Naive thymus-derived CD4-positive, alpha-beta T cell (primary cell): ENCODE measurements at regions of chr14 and their contacts with region 1.

Region 1: GRCh38 chr14:73759714-73760597 is 45.8 kb upstream of the PNMA1 start:
- DNase-seq: peak; percentile 91 to 97 (median 93)
- ATAC-seq: peak; percentile 89
- H3K4me3 ChIP-seq: peak overlapping the region; percentile 72
- H3K4me3 Mint-ChIP-seq: peak overlapping the region; percentile 85 to 96 (median 90)
- H3K27ac ChIP-seq: peak overlapping the region; percentile 86
- H3K27ac Mint-ChIP-seq: peak overlapping the region; percentile 95 to 98 (median 97)
- H3K4me1 ChIP-seq: peaks cover 63 to 65% of the 10 kb centered on the region in 2 donors
- H3K4me1 Mint-ChIP-seq: peaks cover 57 to 87% (median 79%) of the 10 kb centered on the region in 7 donors
- H3K27me3 ChIP-seq: no peaks in the 10 kb centered on the region
- H3K27me3 Mint-ChIP-seq: no peaks in the 10 kb centered on the region

Region 2: DNA sequence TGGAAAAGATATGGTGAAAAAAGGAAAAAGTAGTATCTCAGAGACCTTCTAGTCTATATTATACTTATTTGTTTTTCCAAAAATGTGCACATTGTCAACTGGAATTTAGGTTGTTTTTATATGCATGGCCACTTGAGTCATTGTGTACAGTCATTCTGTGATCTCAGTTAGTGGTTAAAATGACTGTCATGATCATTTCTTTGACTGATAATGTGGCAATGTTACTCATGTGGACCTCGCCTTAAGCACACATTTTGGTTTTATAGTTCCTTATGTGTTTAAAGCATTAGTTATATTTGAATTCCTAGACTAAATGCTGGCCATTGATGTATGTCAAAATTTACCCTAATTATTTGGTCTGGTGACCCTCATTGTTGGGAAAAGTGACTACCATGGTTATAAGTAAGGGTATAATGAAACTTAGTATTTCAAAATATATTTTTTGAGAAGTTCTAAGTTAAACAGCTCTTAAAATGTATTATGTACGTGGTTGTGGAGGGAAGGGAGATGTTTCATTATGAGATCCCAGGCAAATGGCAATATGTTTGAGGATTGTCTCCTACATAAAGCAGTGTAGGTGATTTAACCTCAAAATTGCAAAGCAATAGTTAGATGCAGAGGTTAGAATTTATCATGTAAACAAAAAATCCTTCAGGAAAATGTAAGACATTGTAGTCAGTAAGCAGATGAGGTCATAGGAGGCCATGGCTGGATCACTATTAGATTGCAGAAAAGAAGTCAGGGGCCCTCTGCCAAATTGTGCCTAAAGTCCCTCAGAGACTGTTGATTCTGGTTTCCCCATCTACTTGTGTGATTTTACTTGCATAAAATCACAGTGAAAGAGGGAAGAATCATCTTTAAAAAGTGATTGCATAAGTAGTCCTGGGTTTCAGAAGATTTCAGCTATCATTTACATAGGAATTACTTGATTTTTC is 63.2 kb before region 1 on chr14:
- CTCF ChIA-PET with region 1: no interaction called
- POLR2A ChIA-PET with region 1: no interaction called
- intact Hi-C with region 1: no loop called
- DNase-seq: no peak
- ATAC-seq: no peak
- H3K4me3 ChIP-seq: no peak overlapping the region
- H3K4me3 Mint-ChIP-seq: peak overlapping the region in 1 of 10 donors; percentile 35
- H3K27ac ChIP-seq: no peak overlapping the region
- H3K27ac Mint-ChIP-seq: peak overlapping the region in 1 of 9 donors; percentile 40
- H3K4me1 ChIP-seq: no peaks in the 10 kb centered on the region
- H3K4me1 Mint-ChIP-seq: peaks cover 0 to 28% (median 0%) of the 10 kb centered on the region in 7 donors
- H3K27me3 ChIP-seq: no peaks in the 10 kb centered on the region
- H3K27me3 Mint-ChIP-seq: no peaks in the 10 kb centered on the region

Region 3: GRCh38 chr14:73713803-73714655 is 45.9 kb before region 1 on chr14 and contains the start of gene PNMA1:
- CTCF ChIA-PET with region 1: no interaction called
- POLR2A ChIA-PET with region 1: interaction called, 22 read pairs
- intact Hi-C with region 1: loop called (anchors 1 to 2 kb)
- DNase-seq: peak; percentile 76 to 90 (median 83)
- ATAC-seq: peak; percentile 91
- H3K4me3 ChIP-seq: peak within 1 kb of the TSS; percentile 92
- H3K4me3 Mint-ChIP-seq: peak within 1 kb of the TSS; percentile 91 to 100 (median 97)
- H3K27ac ChIP-seq: peak within 1 kb of the TSS; percentile 83
- H3K27ac Mint-ChIP-seq: peak within 1 kb of the TSS; percentile 93 to 99 (median 96)
- H3K4me1 ChIP-seq: peaks cover 3 to 4% of the 10 kb centered on the region in 2 donors
- H3K4me1 Mint-ChIP-seq: peaks cover 22 to 40% (median 26%) of the 10 kb centered on the region in 7 donors
- H3K27me3 ChIP-seq: no peaks in the 10 kb centered on the region
- H3K27me3 Mint-ChIP-seq: no peaks in the 10 kb centered on the region
- total RNA-seq, gene PNMA1: 21.6 to 40.4 (median 37.1) TPM

Region 4: DNA sequence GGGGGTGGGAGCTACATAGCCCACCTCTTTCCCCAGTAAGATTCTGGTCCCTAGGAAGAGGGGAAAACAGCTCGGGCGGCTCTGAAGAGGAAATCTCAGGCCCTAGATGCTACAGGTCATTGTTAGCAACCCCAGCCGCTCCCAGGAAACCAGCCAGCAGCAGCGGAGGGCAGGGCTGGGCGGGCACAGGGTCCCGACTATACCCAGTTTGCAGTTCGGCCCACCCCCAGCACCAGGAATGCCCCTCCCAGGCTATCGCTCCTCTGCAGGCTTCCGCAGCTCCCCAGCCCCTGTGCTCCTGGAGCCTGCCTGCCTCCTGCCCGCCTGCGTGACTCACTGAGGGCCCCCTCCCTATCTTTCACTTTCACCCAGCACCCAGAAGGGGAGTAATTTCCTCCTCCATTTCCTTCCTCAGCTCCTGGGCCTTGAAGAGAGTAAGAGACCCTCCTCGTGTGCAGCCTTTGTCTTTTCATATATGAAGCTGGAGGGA is 18.5 kb before region 1 on chr14:
- CTCF ChIA-PET with region 1: interaction called, 37 read pairs
- POLR2A ChIA-PET with region 1: interaction called, 267 read pairs
- intact Hi-C with region 1: loop called (anchors 1 kb)
- DNase-seq: peak in 7 of 9 donors; percentile 54 to 75 (median 57)
- ATAC-seq: peak; percentile 78
- H3K4me3 ChIP-seq: peak overlapping the region; percentile 52
- H3K4me3 Mint-ChIP-seq: peak overlapping the region; percentile 66 to 95 (median 88)
- H3K27ac ChIP-seq: peak overlapping the region; percentile 72
- H3K27ac Mint-ChIP-seq: peak overlapping the region; percentile 77 to 99 (median 93)
- H3K4me1 ChIP-seq: peaks cover 65 to 69% of the 10 kb centered on the region in 2 donors
- H3K4me1 Mint-ChIP-seq: peaks cover 43 to 71% (median 67%) of the 10 kb centered on the region in 7 donors
- H3K27me3 ChIP-seq: no peaks in the 10 kb centered on the region
- H3K27me3 Mint-ChIP-seq: no peaks in the 10 kb centered on the region

Region 5: GRCh38 chr14:73777401-73777800 is 17.4 kb after region 1 on chr14:
- CTCF ChIA-PET with region 1: interaction called, 12 read pairs
- POLR2A ChIA-PET with region 1: interaction called, 81 read pairs
- intact Hi-C with region 1: loop called in 1 of 2 experiments (anchors 1 kb)
- DNase-seq: peak in 3 of 9 donors; percentile 34 to 52 (median 52)
- ATAC-seq: peak; percentile 67
- H3K4me3 ChIP-seq: no peak overlapping the region
- H3K4me3 Mint-ChIP-seq: peak overlapping the region in 6 of 10 donors; percentile 15 to 59 (median 27)
- H3K27ac ChIP-seq: no peak overlapping the region
- H3K27ac Mint-ChIP-seq: peak overlapping the region in 8 of 9 donors; percentile 40 to 87 (median 78)
- H3K4me1 ChIP-seq: peaks cover 31 to 48% of the 10 kb centered on the region in 2 donors
- H3K4me1 Mint-ChIP-seq: peaks cover 57 to 83% (median 69%) of the 10 kb centered on the region in 7 donors
- H3K27me3 ChIP-seq: no peaks in the 10 kb centered on the region
- H3K27me3 Mint-ChIP-seq: no peaks in the 10 kb centered on the region

Region 6: GRCh38 chr14:73825551-73826188 is 65.7 kb after region 1 on chr14:
- CTCF ChIA-PET with region 1: interaction called, 6 read pairs
- POLR2A ChIA-PET with region 1: interaction called, 7 read pairs
- intact Hi-C with region 1: loop called (anchors 1 kb)
- DNase-seq: peak; percentile 51 to 76 (median 66)
- ATAC-seq: peak; percentile 96
- H3K4me3 ChIP-seq: no peak overlapping the region
- H3K4me3 Mint-ChIP-seq: no peak overlapping the region
- H3K27ac ChIP-seq: no peak overlapping the region
- H3K27ac Mint-ChIP-seq: no peak overlapping the region
- H3K4me1 ChIP-seq: no peaks in the 10 kb centered on the region
- H3K4me1 Mint-ChIP-seq: peaks cover 0 to 21% (median 0%) of the 10 kb centered on the region in 7 donors
- H3K27me3 ChIP-seq: no peaks in the 10 kb centered on the region
- H3K27me3 Mint-ChIP-seq: peaks cover 0 to 3% (median 0%) of the 10 kb centered on the region in 5 donors

Region 7: GRCh38 chr14:73886449-73887317 is 126.7 kb after region 1 on chr14 and contains the start of gene ZNF410:
- CTCF ChIA-PET with region 1: no interaction called
- POLR2A ChIA-PET with region 1: interaction called, 3 read pairs
- intact Hi-C with region 1: loop called (anchors 1 to 2 kb)
- DNase-seq: peak; percentile 74 to 94 (median 83)
- ATAC-seq: peak; percentile 99
- H3K4me3 ChIP-seq: peak within 1 kb of the TSS; percentile 82
- H3K4me3 Mint-ChIP-seq: peak within 1 kb of the TSS; percentile 90 to 99 (median 98)
- H3K27ac ChIP-seq: peak within 1 kb of the TSS; percentile 97
- H3K27ac Mint-ChIP-seq: peak within 1 kb of the TSS; percentile 64 to 100 (median 99)
- H3K4me1 ChIP-seq: peaks cover 17 to 22% of the 10 kb centered on the region in 2 donors
- H3K4me1 Mint-ChIP-seq: peaks cover 24 to 56% (median 47%) of the 10 kb centered on the region in 7 donors
- H3K27me3 ChIP-seq: no peaks in the 10 kb centered on the region
- H3K27me3 Mint-ChIP-seq: no peaks in the 10 kb centered on the region
- total RNA-seq, gene ZNF410: 44.8 to 79.7 (median 51.1) TPM

Region 8: GRCh38 chr14:74018586-74019407 is 258.8 kb after region 1 on chr14 and contains the starts of genes BBOF1 and ENTPD5:
- CTCF ChIA-PET with region 1: no interaction called
- POLR2A ChIA-PET with region 1: interaction called, 3 read pairs
- intact Hi-C with region 1: loop called in 1 of 2 experiments (anchors 1 kb)
- DNase-seq: peak; percentile 83 to 89 (median 88)
- ATAC-seq: peak; percentile 98
- H3K4me3 ChIP-seq: peak within 1 kb of the TSS; percentile 79
- H3K4me3 Mint-ChIP-seq: peak within 1 kb of the TSS; percentile 80 to 97 (median 94)
- H3K27ac ChIP-seq: peak within 1 kb of the TSS; percentile 93
- H3K27ac Mint-ChIP-seq: peak within 1 kb of the TSS; percentile 89 to 98 (median 96)
- H3K4me1 ChIP-seq: peaks cover 6 to 10% of the 10 kb centered on the region in 2 donors
- H3K4me1 Mint-ChIP-seq: peaks cover 7 to 24% (median 14%) of the 10 kb centered on the region in 7 donors
- H3K27me3 ChIP-seq: no peaks in the 10 kb centered on the region
- H3K27me3 Mint-ChIP-seq: peaks cover 0 to 2% (median 0%) of the 10 kb centered on the region in 5 donors
- total RNA-seq, gene BBOF1: 0.80 to 4.0 (median 2.6) TPM
- total RNA-seq, gene ENTPD5: 8.6 to 17.1 (median 11.2) TPM

Region 9: GRCh38 chr14:74671789-74672188 is 911.8 kb after region 1 on chr14:
- CTCF ChIA-PET with region 1: no interaction called
- POLR2A ChIA-PET with region 1: no interaction called
- intact Hi-C with region 1: no loop called
- DNase-seq: no peak
- ATAC-seq: no peak
- H3K4me3 ChIP-seq: no peak overlapping the region
- H3K4me3 Mint-ChIP-seq: no peak overlapping the region
- H3K27ac ChIP-seq: no peak overlapping the region
- H3K27ac Mint-ChIP-seq: peak overlapping the region in 1 of 9 donors; percentile 65
- H3K4me1 ChIP-seq: no peaks in the 10 kb centered on the region
- H3K4me1 Mint-ChIP-seq: peaks cover 0 to 5% (median 0%) of the 10 kb centered on the region in 7 donors
- H3K27me3 ChIP-seq: no peaks in the 10 kb centered on the region
- H3K27me3 Mint-ChIP-seq: no peaks in the 10 kb centered on the region